Activated naive CD4-positive, alpha-beta T cell treated with anti-CD3 and anti-CD28 coated beads for 36 hours (primary cell): ENCODE measurements at regions of chr19 and their contacts with region 1.

Region 1: DNA sequence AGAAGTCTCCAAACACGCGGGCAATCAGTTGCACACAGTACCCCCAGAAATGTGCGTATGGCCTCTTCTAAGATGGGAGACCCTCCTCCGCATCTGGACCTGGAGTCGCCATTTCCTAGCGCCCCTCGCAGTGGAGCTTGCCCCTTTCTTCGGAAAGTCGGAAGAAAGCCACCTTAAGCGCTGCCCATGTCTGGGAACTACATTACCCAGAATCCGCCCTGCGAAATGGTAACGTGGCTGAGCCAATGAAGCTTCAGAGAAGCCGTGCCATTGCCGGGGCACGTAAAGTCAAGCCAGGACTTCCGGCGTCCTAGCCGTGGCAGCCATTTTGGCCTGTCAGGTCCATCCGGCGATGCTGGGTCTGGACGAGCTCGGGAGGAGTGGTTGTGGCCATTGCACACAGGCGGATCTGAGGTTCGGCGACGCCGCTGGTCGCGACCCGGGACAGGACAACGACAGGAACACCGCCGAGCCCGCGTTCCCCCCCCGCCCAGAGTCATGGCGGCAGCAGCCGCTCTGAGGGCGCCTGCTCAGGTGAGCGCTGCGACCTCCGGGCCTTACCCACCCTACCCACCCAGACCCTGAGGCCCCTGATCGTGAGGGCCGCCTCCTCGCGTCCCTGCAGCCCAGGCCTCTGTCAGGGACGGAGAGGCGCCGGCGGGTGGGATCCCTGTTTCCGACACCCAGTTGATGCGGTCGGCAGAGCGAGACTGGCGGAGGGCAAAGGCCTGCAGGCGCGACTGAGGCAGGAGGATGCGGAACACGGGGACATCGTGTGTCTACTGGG is at the start of gene ZNF586:
- DNase-seq: peak; percentile 93
- H3K4me3 Mint-ChIP-seq: peak within 1 kb of the TSS; percentile 91
- H3K27ac Mint-ChIP-seq: peak within 1 kb of the TSS; percentile 89
- H3K4me1 Mint-ChIP-seq: peaks cover 34% of the 10 kb centered on the region
- H3K27me3 Mint-ChIP-seq: no peaks in the 10 kb centered on the region
- total RNA-seq, gene ZNF586: 14.5 to 14.9 TPM

Region 2: GRCh38 chr19:57527136-57527881 is 242.2 kb before region 1 on chr19 and contains the start of gene ZNF549:
- CTCF ChIA-PET with region 1: no interaction called
- intact Hi-C with region 1: loop called (anchors 1 kb)
- DNase-seq: peak; percentile 91
- H3K4me3 Mint-ChIP-seq: peak within 1 kb of the TSS; percentile 80
- H3K27ac Mint-ChIP-seq: peak within 1 kb of the TSS; percentile 70
- H3K4me1 Mint-ChIP-seq: peaks cover 14% of the 10 kb centered on the region
- H3K27me3 Mint-ChIP-seq: no peaks in the 10 kb centered on the region
- total RNA-seq, gene ZNF549: 1.8 TPM

Region 3: DNA sequence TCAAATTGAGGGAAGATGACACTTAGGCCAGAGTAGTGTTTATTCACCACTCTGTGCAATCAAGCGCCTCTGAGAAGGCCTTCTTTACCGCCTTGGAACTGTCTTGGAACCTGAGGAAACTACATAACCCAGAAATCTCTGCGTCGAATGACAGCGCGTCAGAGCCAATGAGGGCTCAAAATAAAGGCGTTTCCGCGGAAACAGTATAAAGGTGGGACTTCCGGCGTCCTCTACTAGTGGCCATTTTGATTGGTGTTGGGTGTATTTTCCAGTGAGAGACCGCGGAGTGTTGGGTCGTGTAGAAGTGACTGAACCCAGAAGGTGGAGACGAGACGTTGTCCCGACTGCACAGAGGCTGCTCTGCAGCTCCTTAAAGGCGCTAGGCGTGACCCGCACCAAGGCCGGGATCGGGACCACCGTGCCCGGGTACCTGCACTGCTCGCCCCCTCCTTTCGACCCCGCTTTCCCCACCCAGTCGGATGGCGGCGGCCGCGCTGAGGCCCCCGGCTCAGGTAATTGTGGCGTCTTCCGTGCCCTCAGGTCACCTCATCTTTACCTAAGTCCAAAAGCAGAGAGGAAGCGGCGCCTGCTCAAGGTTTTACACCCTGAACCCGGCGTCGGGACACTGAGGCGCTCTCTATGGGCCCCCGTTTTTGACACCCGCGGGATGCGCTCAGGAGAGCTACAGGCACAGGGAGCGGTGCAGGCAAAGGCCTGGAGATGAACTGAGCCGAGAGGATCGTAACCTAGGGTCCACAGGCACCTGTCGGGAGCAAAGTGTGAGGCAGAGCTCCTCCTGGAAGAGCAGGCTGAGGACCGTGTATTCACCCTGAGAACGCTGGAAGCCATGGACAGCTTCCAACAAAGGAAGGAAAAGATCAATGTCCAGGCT is 22.7 kb before region 1 on chr19 and contains the start of gene ZNF776:
- CTCF ChIA-PET with region 1: no interaction called
- intact Hi-C with region 1: loop called (anchors 1 kb)
- DNase-seq: peak; percentile 90
- H3K4me3 Mint-ChIP-seq: peak within 1 kb of the TSS; percentile 99
- H3K27ac Mint-ChIP-seq: peak within 1 kb of the TSS; percentile 90
- H3K4me1 Mint-ChIP-seq: peaks cover 17% of the 10 kb centered on the region
- H3K27me3 Mint-ChIP-seq: no peaks in the 10 kb centered on the region
- total RNA-seq, gene ZNF776: 9.4 to 10.3 TPM

Region 4: GRCh38 chr19:57927587-57927986 is 158.0 kb after region 1 on chr19:
- CTCF ChIA-PET with region 1: no interaction called
- intact Hi-C with region 1: no loop called
- DNase-seq: no peak
- H3K4me3 Mint-ChIP-seq: no peak overlapping the region
- H3K27ac Mint-ChIP-seq: no peak overlapping the region
- H3K4me1 Mint-ChIP-seq: no peaks in the 10 kb centered on the region
- H3K27me3 Mint-ChIP-seq: no peaks in the 10 kb centered on the region